Mammary epithelial cell (primary cell): ENCODE measurements at regions of chr6 and their contacts with region 1.

Region 1: DNA sequence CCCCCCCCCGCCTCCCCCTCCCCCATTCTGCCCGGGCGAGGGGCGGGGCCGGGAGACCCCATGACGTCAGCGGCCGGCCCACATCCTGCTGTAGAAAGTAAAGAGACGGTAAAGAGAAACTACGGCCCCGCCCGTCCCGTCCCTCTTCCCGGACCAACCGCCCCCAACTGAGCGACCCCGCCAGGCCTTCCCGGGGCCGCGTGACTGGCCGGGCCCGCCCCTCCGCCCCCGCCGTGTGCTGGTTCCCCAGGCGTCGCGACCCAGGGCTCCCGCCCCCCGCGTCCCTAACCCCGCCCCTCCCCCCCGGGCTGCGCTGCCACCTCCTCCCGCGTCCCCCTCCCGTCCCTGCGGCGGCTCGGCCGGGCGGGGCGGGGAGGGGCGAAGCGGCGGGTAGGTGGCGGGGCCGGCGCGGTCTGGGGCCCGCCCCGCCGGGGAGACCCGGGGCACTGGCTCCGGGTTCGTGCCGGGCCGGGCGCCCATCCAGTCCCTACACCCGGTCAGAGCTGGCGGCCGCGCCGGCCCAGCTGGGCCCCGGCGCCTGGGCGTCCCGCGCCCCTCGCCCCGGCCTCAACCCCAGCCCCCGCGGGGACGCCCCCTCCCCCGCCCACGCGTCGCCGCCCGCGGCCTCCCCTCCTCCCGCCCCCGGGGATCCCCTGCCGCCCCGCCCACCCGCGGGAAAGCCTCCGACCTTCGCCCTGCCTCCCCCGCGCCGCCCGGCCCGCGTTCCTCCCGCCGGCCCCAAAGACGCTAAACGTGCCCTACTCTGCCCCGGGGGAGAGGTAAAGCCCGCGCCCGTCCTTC is 636 bp upstream of the HIVEP1 start:
- DNase-seq: peak; percentile 96
- H3K4me3 ChIP-seq: peak overlapping the region in 2 of 3 experiments; percentile 73 to 85
- H3K27ac ChIP-seq: peak overlapping the region; percentile 21
- H3K4me1 ChIP-seq: peaks cover 21% of the 10 kb centered on the region
- H3K27me3 ChIP-seq: no peaks in the 10 kb centered on the region
- CTCF ChIP-seq: no peak

Region 2: GRCh38 chr6:11685152-11686093 is 326.1 kb before region 1 on chr6:
- CTCF ChIA-PET with region 1: no interaction called
- dilution Hi-C with region 1: no loop called
- in situ Hi-C with region 1: no loop called
- intact Hi-C with region 1: loop called (anchors 5 kb)
- DNase-seq: peak; percentile 89
- H3K4me3 ChIP-seq: peak overlapping the region in 2 of 3 experiments; percentile 4
- H3K27ac ChIP-seq: peak overlapping the region; percentile 65
- H3K4me1 ChIP-seq: peaks cover 20% of the 10 kb centered on the region
- H3K27me3 ChIP-seq: no peaks in the 10 kb centered on the region
- CTCF ChIP-seq: no peak

Region 3: GRCh38 chr6:11810039-11810541 is 201.4 kb before region 1 on chr6:
- CTCF ChIA-PET with region 1: interaction called, 10 read pairs
- dilution Hi-C with region 1: no loop called
- in situ Hi-C with region 1: no loop called
- intact Hi-C with region 1: loop called (anchors 1 kb)
- DNase-seq: peak; percentile 90
- H3K4me3 ChIP-seq: no peak overlapping the region
- H3K27ac ChIP-seq: peak overlapping the region; percentile 46
- H3K4me1 ChIP-seq: peaks cover 56% of the 10 kb centered on the region
- H3K27me3 ChIP-seq: no peaks in the 10 kb centered on the region
- CTCF ChIP-seq: no peak

Region 4: DNA sequence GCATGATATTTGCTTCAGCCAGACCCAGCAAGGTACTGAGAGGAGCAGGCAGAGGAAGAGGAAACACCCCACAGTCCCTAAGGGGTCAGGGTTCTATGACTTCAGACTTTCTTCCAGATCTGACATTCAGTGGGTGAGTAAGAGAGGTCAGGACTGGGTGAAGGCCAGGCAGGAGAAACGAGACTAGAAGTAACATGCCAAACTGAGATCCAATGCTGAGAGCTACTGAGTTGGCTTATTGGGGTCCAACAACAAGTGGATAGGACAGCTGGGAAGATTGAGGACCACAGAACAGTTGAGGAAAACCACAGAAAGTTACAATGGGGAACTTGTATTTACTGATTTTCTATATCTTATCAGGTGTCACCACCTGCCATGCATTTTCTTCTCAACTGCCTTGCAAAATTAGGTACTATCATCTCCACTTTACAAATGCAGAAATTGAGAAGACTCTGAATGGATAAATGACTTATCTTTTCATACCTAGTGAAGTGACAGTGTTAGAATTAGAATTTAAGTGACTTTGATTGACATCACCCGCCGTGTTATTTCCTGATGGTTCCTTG is 43.2 kb before region 1 on chr6:
- CTCF ChIA-PET with region 1: no interaction called
- dilution Hi-C with region 1: no loop called
- in situ Hi-C with region 1: no loop called
- intact Hi-C with region 1: no loop called
- DNase-seq: no peak
- H3K4me3 ChIP-seq: no peak overlapping the region
- H3K27ac ChIP-seq: no peak overlapping the region
- H3K4me1 ChIP-seq: no peaks in the 10 kb centered on the region
- H3K27me3 ChIP-seq: no peaks in the 10 kb centered on the region
- CTCF ChIP-seq: no peak

Region 5: DNA sequence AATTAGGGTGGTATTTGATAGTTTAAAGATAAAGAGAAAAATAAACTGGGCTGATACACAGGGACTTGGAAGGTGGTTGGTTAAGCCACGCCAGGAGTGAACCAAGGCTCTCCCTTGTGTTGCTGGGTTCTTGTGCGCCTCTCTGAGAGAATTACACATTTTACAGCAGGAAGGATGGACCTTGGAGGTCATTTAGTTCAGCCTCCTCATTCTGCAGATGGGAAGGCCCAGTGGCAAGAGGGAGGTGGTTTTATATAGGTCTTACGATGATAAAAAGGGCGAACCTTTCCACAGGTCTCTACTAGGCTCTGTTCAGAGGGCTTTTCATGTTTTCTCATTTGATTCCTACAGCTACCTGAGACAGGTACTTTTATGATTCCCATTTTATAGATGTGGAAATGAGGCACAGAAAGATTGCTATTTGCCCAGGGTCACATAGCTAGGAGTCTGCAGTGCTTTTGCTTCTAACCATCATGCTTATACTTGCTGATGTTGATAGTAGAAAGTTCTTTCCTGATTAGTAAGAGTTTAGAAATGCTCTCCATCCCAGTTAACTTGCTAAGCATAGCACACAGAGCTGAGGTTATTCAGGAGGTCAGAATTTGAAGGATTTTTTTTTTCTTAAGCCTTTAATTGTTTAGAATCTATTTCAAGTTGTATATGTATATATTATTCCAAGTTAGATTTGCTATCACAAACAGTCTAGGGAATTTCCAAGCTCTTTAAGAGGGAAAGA is 13.4 kb after region 1 on chr6:
- CTCF ChIA-PET with region 1: no interaction called
- dilution Hi-C with region 1: no loop called
- in situ Hi-C with region 1: no loop called
- intact Hi-C with region 1: no loop called
- DNase-seq: peak; percentile 49
- H3K4me3 ChIP-seq: no peak overlapping the region
- H3K27ac ChIP-seq: no peak overlapping the region
- H3K4me1 ChIP-seq: peaks cover 14% of the 10 kb centered on the region
- H3K27me3 ChIP-seq: no peaks in the 10 kb centered on the region
- CTCF ChIP-seq: no peak

Region 6: GRCh38 chr6:12075067-12075563 is 63.6 kb after region 1 on chr6:
- CTCF ChIA-PET with region 1: no interaction called
- dilution Hi-C with region 1: no loop called
- in situ Hi-C with region 1: no loop called
- intact Hi-C with region 1: loop called (anchors 2 kb)
- DNase-seq: peak; percentile 45
- H3K4me3 ChIP-seq: no peak overlapping the region
- H3K27ac ChIP-seq: no peak overlapping the region
- H3K4me1 ChIP-seq: peaks cover 18% of the 10 kb centered on the region
- H3K27me3 ChIP-seq: no peaks in the 10 kb centered on the region
- CTCF ChIP-seq: peak; percentile 24 to 42